ENCODE measurements at regions of chr1 and their contacts with region 1.

Region 1: DNA sequence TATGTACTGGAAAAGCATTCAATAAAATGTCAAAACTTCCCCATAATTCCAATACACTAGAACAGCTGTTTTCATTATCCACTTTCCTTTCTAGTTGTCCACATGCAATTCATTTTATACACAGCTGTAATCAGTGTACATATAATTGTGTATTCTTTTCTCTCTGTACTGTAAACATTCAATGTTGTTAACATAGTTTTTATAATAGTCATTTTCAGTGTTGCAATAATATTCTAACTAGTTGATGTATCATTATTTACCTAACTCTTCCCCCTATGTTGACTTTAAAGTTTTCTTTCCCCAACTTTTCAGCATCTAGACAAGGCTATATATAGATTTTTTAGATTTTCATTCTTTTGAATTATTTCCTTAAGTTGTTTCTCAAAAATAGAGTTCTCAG is 44.4 kb downstream of the DIPK1A start:
- DNase-seq: no peak
- ATAC-seq: no peak
- H3K4me3 Mint-ChIP-seq: no peak overlapping the region
- H3K27ac Mint-ChIP-seq: no peak overlapping the region
- H3K4me1 Mint-ChIP-seq: peaks cover 59% of the 10 kb centered on the region
- H3K27me3 Mint-ChIP-seq: no peaks in the 10 kb centered on the region
- CTCF ChIP-seq: no peak

Region 2: GRCh38 chr1:92749024-92749634 is 167.8 kb before region 1 on chr1:
- CTCF ChIA-PET with region 1: no interaction called
- POLR2A ChIA-PET with region 1: no interaction called
- intact Hi-C with region 1: no loop called
- DNase-seq: no peak
- ATAC-seq: peak; percentile 79
- H3K4me3 Mint-ChIP-seq: no peak overlapping the region
- H3K27ac Mint-ChIP-seq: no peak overlapping the region
- H3K4me1 Mint-ChIP-seq: no peaks in the 10 kb centered on the region
- H3K27me3 Mint-ChIP-seq: no peaks in the 10 kb centered on the region
- CTCF ChIP-seq: peak; percentile 32

Region 3: GRCh38 chr1:92886886-92887419 is 29.9 kb before region 1 on chr1:
- CTCF ChIA-PET with region 1: no interaction called
- POLR2A ChIA-PET with region 1: no interaction called
- intact Hi-C with region 1: no loop called
- DNase-seq: no peak
- ATAC-seq: no peak
- H3K4me3 Mint-ChIP-seq: no peak overlapping the region
- H3K27ac Mint-ChIP-seq: peak overlapping the region; percentile 13
- H3K4me1 Mint-ChIP-seq: peaks cover 48% of the 10 kb centered on the region
- H3K27me3 Mint-ChIP-seq: no peaks in the 10 kb centered on the region
- CTCF ChIP-seq: no peak

Region 4: DNA sequence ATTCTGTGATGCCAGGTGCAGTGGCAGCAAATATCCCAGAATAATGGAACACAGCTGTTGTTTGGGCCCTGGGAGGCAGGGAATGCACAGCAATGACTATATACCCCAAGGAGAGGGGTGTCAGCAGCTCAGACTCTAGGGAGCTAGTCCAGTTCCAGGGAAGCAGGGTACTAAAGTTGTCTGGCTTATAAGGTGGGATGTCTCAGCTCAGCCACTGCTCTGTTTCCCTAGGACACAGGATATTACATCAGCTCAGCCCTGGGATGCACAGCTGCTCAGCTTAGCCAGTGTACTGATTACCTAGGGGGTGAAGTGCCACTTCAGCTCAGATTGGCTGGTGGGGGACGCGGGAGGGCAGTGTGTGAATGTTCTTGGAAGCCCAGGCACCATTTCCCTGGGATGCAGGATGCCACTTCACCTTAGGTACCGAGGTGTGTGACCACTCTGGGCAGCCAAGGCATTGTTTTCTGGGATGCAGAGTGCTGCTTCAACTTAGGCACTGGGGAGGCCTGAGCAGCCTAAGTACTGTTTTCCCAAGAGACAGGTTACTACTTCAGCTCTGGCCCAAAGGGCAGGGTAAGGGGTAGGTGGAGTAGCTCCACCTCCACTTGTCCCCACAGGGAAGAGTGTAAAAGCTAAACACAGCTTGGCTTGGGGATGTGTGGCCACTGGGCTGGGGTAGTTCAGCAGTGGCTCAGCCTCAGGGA is 15.1 kb before region 1 on chr1:
- CTCF ChIA-PET with region 1: no interaction called
- POLR2A ChIA-PET with region 1: no interaction called
- intact Hi-C with region 1: loop called (anchors 2 kb)
- DNase-seq: no peak
- ATAC-seq: no peak
- H3K4me3 Mint-ChIP-seq: no peak overlapping the region
- H3K27ac Mint-ChIP-seq: no peak overlapping the region
- H3K4me1 Mint-ChIP-seq: peaks cover 61% of the 10 kb centered on the region
- H3K27me3 Mint-ChIP-seq: no peaks in the 10 kb centered on the region
- CTCF ChIP-seq: no peak

Region 5: GRCh38 chr1:92934395-92935378 is 17.8 kb after region 1 on chr1:
- CTCF ChIA-PET with region 1: no interaction called
- POLR2A ChIA-PET with region 1: interaction called, 9 read pairs
- intact Hi-C with region 1: loop called (anchors 2 kb)
- DNase-seq: no peak
- ATAC-seq: no peak
- H3K4me3 Mint-ChIP-seq: peak overlapping the region; percentile 45
- H3K27ac Mint-ChIP-seq: peak overlapping the region; percentile 43
- H3K4me1 Mint-ChIP-seq: peaks cover 87% of the 10 kb centered on the region
- H3K27me3 Mint-ChIP-seq: no peaks in the 10 kb centered on the region
- CTCF ChIP-seq: no peak

Region 6: GRCh38 chr1:93015590-93015989 is 98.7 kb after region 1 on chr1:
- CTCF ChIA-PET with region 1: no interaction called
- POLR2A ChIA-PET with region 1: no interaction called
- intact Hi-C with region 1: no loop called
- DNase-seq: no peak
- ATAC-seq: no peak
- H3K4me3 Mint-ChIP-seq: no peak overlapping the region
- H3K27ac Mint-ChIP-seq: no peak overlapping the region
- H3K4me1 Mint-ChIP-seq: peaks cover 1% of the 10 kb centered on the region
- H3K27me3 Mint-ChIP-seq: no peaks in the 10 kb centered on the region
- CTCF ChIP-seq: no peak

Region 7: DNA sequence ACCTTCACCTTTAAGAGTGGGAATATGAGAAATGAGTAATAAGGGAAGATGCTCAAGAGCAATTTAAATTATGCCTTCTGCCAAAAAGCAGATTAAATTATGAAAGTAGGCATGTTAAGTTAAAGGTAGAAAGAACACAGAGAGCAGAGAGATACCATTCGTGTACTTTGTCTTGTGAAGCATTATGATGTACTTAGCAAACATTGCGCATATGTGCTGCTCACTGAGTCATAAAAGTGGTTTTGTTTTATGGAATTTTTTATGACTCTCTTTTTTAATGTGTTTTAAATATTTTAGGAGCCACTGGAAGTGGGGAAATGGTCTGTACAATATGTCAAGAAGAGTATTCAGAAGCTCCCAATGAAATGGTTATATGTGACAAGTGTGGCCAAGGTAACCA is 197.5 kb after region 1 on chr1:
- CTCF ChIA-PET with region 1: no interaction called
- POLR2A ChIA-PET with region 1: no interaction called
- intact Hi-C with region 1: no loop called
- DNase-seq: no peak
- ATAC-seq: no peak
- H3K4me3 Mint-ChIP-seq: no peak overlapping the region
- H3K27ac Mint-ChIP-seq: no peak overlapping the region
- H3K4me1 Mint-ChIP-seq: peaks cover 22% of the 10 kb centered on the region
- H3K27me3 Mint-ChIP-seq: no peaks in the 10 kb centered on the region
- CTCF ChIP-seq: no peak

Measured in activated B cell treated with CpG ODN at 0.5 μM for 24 hours (primary cell).